B cell (primary cell): ENCODE measurements at regions of chr13 and their contacts with region 1.

Region 1: DNA sequence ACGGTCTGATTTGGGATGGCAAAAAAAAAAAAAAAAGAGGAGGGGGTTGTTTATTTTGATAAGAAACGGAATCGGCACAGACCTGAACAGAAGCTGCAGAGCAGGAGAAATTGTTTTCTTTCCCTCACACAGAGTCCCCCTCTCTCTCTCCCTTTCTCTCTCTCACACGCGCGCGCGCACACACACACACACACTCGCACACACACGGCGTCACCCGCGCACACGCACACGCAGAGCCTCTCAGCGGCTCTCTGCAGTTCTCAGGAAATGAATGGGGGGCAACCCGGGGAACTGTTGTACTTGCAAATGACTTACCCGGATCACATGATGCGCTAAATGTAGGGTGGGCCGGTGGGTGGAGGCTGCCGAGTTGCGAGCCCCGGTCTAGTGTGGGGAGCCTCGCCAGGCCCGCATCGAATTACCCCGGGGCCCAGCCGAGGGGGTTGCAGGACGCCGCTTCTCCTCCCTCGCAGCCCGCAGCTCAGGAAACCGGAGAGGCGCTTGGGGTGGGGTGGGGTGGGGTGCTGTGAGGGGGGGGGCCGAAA is 475 bp downstream of the KLF12 start:
- DNase-seq: peak; percentile 97
- ATAC-seq: peak; percentile 53
- H3K4me3 ChIP-seq: peak overlapping the region; percentile 78 to 91 (median 81)
- H3K4me3 Mint-ChIP-seq: peak overlapping the region; percentile 99
- H3K27ac ChIP-seq: peak overlapping the region; percentile 87 to 95
- H3K27ac Mint-ChIP-seq: peak overlapping the region; percentile 100
- H3K4me1 ChIP-seq: peaks cover 33 to 35% of the 10 kb centered on the region in 2 donors
- H3K4me1 Mint-ChIP-seq: peaks cover 39% of the 10 kb centered on the region
- H3K27me3 ChIP-seq: no peaks in the 10 kb centered on the region
- H3K27me3 Mint-ChIP-seq: no peaks in the 10 kb centered on the region
- CTCF ChIP-seq: no peak

Region 2: GRCh38 chr13:73835138-73835721 is 298.5 kb before region 1 on chr13:
- CTCF ChIA-PET with region 1: interaction called, 4 read pairs
- POLR2A ChIA-PET with region 1: no interaction called
- intact Hi-C with region 1: loop called (anchors 5 kb)
- DNase-seq: peak; percentile 64
- ATAC-seq: peak; percentile 57
- H3K4me3 ChIP-seq: no peak overlapping the region
- H3K4me3 Mint-ChIP-seq: no peak overlapping the region
- H3K27ac ChIP-seq: no peak overlapping the region
- H3K27ac Mint-ChIP-seq: no peak overlapping the region
- H3K4me1 ChIP-seq: peaks cover 2 to 5% of the 10 kb centered on the region in 2 donors
- H3K4me1 Mint-ChIP-seq: peaks cover 23% of the 10 kb centered on the region
- H3K27me3 ChIP-seq: no peaks in the 10 kb centered on the region
- H3K27me3 Mint-ChIP-seq: no peaks in the 10 kb centered on the region
- CTCF ChIP-seq: peak; percentile 91

Region 3: DNA sequence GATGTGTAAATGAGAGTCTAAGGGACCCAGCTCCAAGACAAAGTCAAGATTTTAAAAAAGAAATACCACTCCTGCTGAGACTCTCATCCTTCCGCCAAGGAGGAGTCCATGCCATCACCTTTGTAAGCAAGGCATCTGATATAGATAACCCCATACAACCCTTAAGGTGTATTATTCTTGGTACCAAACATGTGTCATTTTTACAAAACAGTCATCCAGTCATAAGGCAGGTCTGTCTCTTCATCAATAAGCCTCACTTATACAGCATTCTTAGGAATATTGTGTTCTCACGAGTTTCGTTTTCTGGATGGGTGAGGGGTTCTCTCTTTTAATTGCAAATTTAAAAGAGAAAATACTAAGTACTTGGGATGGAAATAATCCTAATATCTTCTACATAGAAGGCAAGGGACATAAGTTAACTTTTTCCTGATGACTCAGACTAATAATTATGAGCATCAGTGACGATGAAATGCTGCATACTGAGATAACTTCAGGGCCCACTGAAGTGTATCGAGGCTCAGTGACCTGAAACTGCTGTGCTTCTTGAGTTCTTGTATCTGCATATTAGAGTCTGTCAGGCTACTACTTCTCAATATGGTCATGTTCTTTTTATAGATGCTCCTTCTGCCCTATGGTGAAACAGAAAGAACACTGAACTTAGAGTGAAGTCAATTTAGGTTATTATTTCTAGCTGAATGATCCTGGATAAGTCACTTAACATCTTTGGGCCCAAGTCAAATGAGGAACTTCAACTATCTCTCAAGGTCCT is 166.1 kb before region 1 on chr13:
- CTCF ChIA-PET with region 1: no interaction called
- POLR2A ChIA-PET with region 1: interaction called, 3 read pairs
- intact Hi-C with region 1: loop called (anchors 2 kb)
- DNase-seq: peak; percentile 80
- ATAC-seq: peak; percentile 91
- H3K4me3 ChIP-seq: no peak overlapping the region
- H3K4me3 Mint-ChIP-seq: peak overlapping the region; percentile 44
- H3K27ac ChIP-seq: peak overlapping the region; percentile 47 to 48
- H3K27ac Mint-ChIP-seq: peak overlapping the region; percentile 76
- H3K4me1 ChIP-seq: peaks cover 23 to 28% of the 10 kb centered on the region in 2 donors
- H3K4me1 Mint-ChIP-seq: peaks cover 55% of the 10 kb centered on the region
- H3K27me3 ChIP-seq: no peaks in the 10 kb centered on the region
- H3K27me3 Mint-ChIP-seq: no peaks in the 10 kb centered on the region
- CTCF ChIP-seq: no peak

Region 4: GRCh38 chr13:74062933-74063332 is 70.8 kb before region 1 on chr13:
- CTCF ChIA-PET with region 1: interaction called, 4 read pairs
- POLR2A ChIA-PET with region 1: interaction called, 6 read pairs
- intact Hi-C with region 1: loop called (anchors 2 kb)
- DNase-seq: peak; percentile 34
- ATAC-seq: peak; percentile 50
- H3K4me3 ChIP-seq: peak overlapping the region in 3 of 5 experiments; percentile 21 to 49 (median 22)
- H3K4me3 Mint-ChIP-seq: peak overlapping the region; percentile 83
- H3K27ac ChIP-seq: peak overlapping the region; percentile 63 to 81
- H3K27ac Mint-ChIP-seq: peak overlapping the region; percentile 88
- H3K4me1 ChIP-seq: peaks cover 49 to 59% of the 10 kb centered on the region in 2 donors
- H3K4me1 Mint-ChIP-seq: peaks cover 81% of the 10 kb centered on the region
- H3K27me3 ChIP-seq: no peaks in the 10 kb centered on the region
- H3K27me3 Mint-ChIP-seq: no peaks in the 10 kb centered on the region
- CTCF ChIP-seq: no peak

Region 5: GRCh38 chr13:74118328-74118727 is 15.4 kb before region 1 on chr13:
- CTCF ChIA-PET with region 1: interaction called, 3 read pairs
- POLR2A ChIA-PET with region 1: interaction called, 3 read pairs
- intact Hi-C with region 1: loop called (anchors 2 kb)
- DNase-seq: no peak
- ATAC-seq: no peak
- H3K4me3 ChIP-seq: no peak overlapping the region
- H3K4me3 Mint-ChIP-seq: no peak overlapping the region
- H3K27ac ChIP-seq: no peak overlapping the region
- H3K27ac Mint-ChIP-seq: no peak overlapping the region
- H3K4me1 ChIP-seq: no peaks in the 10 kb centered on the region
- H3K4me1 Mint-ChIP-seq: peaks cover 27% of the 10 kb centered on the region
- H3K27me3 ChIP-seq: no peaks in the 10 kb centered on the region
- H3K27me3 Mint-ChIP-seq: no peaks in the 10 kb centered on the region
- CTCF ChIP-seq: no peak